Ovary (tissue), 10 donors: ENCODE measurements at regions of chrX and their contacts with region 1.

Region 1: DNA sequence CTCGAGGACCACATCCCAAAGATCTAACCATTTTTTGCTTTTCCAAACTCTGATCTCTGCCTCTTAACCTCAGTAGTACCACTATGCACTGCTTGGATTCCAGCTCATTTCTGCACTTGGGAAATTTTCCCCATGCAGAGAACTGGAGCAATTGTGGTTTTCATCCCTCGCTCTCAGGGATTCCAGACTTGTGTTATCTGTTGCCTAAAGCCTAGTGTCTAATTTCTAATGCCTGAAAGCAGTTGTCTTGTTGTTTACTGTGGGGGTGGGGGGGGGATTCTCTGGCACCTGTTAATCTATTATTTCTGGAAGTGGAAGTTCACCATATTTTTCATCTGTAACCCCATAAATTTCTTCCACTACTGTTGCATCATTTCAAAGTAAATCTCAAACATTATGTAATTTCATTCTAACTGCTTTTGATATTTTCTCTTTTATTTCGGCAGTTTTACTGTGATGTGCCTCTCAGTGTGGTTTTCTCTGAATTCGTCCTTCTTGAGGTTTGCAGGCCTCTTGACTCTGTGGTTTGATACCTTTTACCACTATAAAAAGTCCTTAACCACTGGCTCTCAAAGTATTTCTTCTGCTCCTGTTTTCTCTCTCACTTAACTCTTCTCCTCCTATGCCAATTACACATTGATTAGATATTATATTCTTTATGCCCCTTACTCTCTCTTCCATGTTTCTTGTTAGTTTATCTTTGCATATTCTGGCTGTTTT is 205.6 kb upstream of the EOLA2 start:
- DNase-seq: no peak
- H3K4me3 ChIP-seq: no peak overlapping the region
- H3K27ac ChIP-seq: no peak overlapping the region
- H3K4me1 ChIP-seq: no peaks in the 10 kb centered on the region
- H3K27me3 ChIP-seq: no peaks in the 10 kb centered on the region
- CTCF ChIP-seq: no peak
- EP300 ChIP-seq: no peak
- POLR2A ChIP-seq: no peak

Region 2: DNA sequence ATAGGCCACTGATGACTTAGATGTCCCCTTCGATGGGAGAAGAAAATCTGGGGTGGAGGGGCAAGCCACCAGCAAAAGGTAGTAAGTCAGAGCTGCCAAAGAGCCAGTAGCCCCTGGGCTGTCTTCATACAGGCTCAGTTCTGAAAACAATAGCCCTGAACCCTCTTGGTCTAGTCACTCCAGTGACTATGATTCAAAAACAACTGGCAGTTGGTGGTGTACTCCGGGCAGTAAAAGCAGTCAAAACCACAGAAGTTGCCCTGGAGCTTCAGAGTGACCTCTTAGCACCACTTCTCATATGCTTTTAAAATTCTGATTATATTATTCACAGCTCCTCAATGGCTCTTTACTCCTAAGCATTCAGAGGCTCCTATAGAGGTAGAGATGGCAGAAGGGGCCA is 54.9 kb after region 1 on chrX:
- intact Hi-C with region 1: loop called in 1 of 4 experiments (anchors 10 kb)
- DNase-seq: no peak
- H3K4me3 ChIP-seq: no peak overlapping the region
- H3K27ac ChIP-seq: no peak overlapping the region
- H3K4me1 ChIP-seq: no peaks in the 10 kb centered on the region
- H3K27me3 ChIP-seq: no peaks in the 10 kb centered on the region
- CTCF ChIP-seq: no peak
- EP300 ChIP-seq: no peak
- POLR2A ChIP-seq: no peak